GM10248 (cell line): ENCODE measurements at regions of chr21 and their contacts with region 1.

Region 1: GRCh38 chr21:25385911-25386474 is 221.3 kb downstream of the MRPL39 start:
- DNase-seq: peak; percentile 34
- CTCF ChIP-seq: peak; percentile 63

Region 2: GRCh38 chr21:24895885-24896734 is 489.9 kb before region 1 on chr21:
- CTCF ChIA-PET with region 1: interaction called, 16 read pairs
- POLR2A ChIA-PET with region 1: no interaction called
- DNase-seq: no peak
- CTCF ChIP-seq: peak; percentile 40

Region 3: GRCh38 chr21:25283720-25284119 is 102.3 kb before region 1 on chr21:
- CTCF ChIA-PET with region 1: interaction called, 10 read pairs
- POLR2A ChIA-PET with region 1: no interaction called
- DNase-seq: peak; percentile 25
- CTCF ChIP-seq: peak; percentile 32

Region 4: DNA sequence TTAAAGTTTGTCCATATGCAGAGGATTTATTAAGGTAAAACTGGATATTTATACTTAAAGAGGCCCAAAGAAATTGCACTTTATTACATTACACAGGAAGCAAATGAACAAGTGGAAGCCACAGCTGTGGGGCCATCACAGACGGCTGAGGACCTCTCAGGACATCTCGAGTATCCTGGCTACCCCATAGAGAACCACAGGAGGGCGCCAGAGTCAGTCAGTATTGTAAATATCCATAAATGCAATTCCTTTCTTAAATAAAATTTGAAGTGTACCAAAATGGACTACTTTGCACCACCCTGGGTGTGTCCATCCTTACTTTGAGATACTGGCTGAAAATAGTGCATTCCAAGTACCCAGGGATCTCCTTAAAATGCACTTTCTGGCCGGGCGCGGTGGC is 35.9 kb before region 1 on chr21:
- CTCF ChIA-PET with region 1: interaction called, 18 read pairs
- POLR2A ChIA-PET with region 1: no interaction called
- DNase-seq: peak; percentile 20
- CTCF ChIP-seq: peak; percentile 38

Region 5: GRCh38 chr21:25360593-25360992 is 25.4 kb before region 1 on chr21:
- CTCF ChIA-PET with region 1: interaction called, 12 read pairs
- POLR2A ChIA-PET with region 1: no interaction called
- DNase-seq: no peak
- CTCF ChIP-seq: no peak

Region 6: GRCh38 chr21:25370311-25370744 is 15.7 kb before region 1 on chr21:
- CTCF ChIA-PET with region 1: interaction called, 19 read pairs
- POLR2A ChIA-PET with region 1: no interaction called
- DNase-seq: no peak
- CTCF ChIP-seq: no peak

Region 7: GRCh38 chr21:25396135-25396711 is 10.2 kb after region 1 on chr21:
- CTCF ChIA-PET with region 1: interaction called, 22 read pairs
- POLR2A ChIA-PET with region 1: no interaction called
- DNase-seq: peak; percentile 60
- CTCF ChIP-seq: no peak